Aorta (tissue), 5 donors: ENCODE measurements at regions of chr6 and their contacts with region 1.

Region 1: GRCh38 chr6:50128420-50129005 is 78.8 kb upstream of the DEFB112 start:
- DNase-seq: no peak
- ATAC-seq: no peak
- H3K4me3 ChIP-seq: no peak overlapping the region
- H3K27ac ChIP-seq: no peak overlapping the region
- H3K4me1 ChIP-seq: no peaks in the 10 kb centered on the region
- H3K27me3 ChIP-seq: no peaks in the 10 kb centered on the region

Region 2: DNA sequence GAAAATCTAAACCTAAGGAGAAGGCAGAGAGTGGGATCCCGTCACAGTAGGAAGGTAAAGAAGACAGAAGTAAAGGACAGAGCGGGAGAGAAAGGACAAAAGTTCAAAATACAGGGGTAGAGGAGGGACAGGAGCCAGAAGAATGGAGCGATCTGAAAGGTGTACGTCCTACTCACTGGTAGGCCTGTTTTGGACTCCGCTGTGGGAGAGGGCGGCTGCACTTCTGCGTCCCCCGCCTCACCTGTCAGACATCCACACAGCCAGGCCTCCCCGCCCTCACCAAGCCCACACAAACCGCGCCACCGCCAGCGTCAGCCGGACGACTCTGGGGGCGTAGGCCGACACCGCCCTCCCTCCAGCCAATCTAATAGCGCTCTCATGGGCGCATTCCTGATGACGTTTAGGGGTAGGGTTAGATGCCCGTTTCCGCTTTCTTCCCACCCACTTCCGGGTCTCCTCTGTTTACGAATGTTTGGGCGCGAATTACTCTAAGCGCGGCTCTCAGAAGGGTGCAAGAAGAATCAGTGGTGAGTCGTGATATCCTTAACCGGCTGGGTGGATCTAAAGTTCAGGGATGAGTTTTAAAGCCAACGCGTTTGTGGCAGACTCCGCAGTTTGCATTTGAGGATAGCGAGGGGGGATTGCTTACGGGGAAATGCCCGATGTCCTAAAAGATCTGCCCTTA is 665.4 kb before region 1 on chr6 and contains the starts of genes CENPQ and MMUT:
- intact Hi-C with region 1: no loop called
- DNase-seq: peak; percentile 95 to 96
- ATAC-seq: peak; percentile 99
- H3K4me3 ChIP-seq: peak within 1 kb of the TSS; percentile 94 to 100
- H3K27ac ChIP-seq: peak within 1 kb of the TSS; percentile 43 to 83
- H3K4me1 ChIP-seq: peaks cover 0 to 2% of the 10 kb centered on the region in 2 donors
- H3K27me3 ChIP-seq: no peaks in the 10 kb centered on the region
- total RNA-seq, gene CENPQ: 3.8 to 4.2 TPM
- total RNA-seq, gene MMUT: 20.7 to 24.2 TPM

Region 3: DNA sequence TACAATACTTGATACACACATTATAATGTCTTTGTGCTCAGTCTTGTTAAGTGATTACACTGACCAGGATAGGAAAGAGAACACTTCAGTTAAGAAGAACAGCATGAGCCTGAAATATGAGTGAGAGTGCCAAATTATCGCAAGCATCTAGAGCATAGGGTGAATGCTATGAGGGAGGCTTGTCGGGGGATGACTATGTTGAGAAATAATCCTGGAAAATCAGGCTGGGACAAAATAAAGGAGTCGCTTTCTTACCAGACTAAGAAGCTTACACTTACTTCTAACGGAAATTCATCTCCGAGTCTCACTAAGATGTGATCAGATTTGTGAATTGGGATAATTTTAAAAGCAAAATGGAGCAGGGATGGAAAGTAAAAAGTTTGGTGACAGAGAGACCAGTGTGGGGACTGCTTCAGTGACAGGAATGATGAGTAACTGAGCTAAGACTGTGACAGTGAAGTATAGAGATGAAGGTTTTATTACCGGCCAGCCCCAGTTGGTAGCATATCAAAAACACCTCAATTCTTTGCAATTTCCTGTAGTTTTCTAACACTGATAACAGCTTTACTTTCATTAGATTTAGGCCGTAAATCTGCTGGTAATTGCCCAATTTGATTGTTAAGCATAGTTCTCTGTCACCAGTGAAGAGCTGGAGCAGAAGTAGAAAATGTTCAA is 30.4 kb before region 1 on chr6:
- intact Hi-C with region 1: no loop called
- DNase-seq: no peak
- ATAC-seq: no peak
- H3K4me3 ChIP-seq: no peak overlapping the region
- H3K27ac ChIP-seq: no peak overlapping the region
- H3K4me1 ChIP-seq: no peaks in the 10 kb centered on the region
- H3K27me3 ChIP-seq: no peaks in the 10 kb centered on the region

Region 4: DNA sequence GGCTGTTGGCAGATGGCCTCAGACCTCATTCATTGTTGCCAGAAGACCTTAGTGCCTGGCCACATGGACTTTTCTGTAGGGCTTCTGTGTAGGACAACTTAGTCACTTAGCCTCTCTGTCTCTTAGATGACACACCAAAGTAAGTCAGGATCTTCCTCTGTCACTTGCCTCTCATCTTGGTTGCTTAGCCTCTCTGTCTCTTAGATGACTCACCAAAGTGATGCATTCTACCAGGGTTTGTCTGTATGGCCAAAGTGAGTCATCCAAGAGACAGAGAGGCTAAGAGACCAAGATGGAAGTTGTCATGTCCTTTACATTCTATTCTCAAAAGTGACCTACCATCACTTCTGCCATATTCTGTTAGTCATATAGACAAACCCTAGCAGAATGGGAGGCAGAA is 177.1 kb after region 1 on chr6:
- intact Hi-C with region 1: no loop called
- DNase-seq: no peak
- ATAC-seq: no peak
- H3K4me3 ChIP-seq: no peak overlapping the region
- H3K27ac ChIP-seq: no peak overlapping the region
- H3K4me1 ChIP-seq: no peaks in the 10 kb centered on the region
- H3K27me3 ChIP-seq: no peaks in the 10 kb centered on the region

Region 5: DNA sequence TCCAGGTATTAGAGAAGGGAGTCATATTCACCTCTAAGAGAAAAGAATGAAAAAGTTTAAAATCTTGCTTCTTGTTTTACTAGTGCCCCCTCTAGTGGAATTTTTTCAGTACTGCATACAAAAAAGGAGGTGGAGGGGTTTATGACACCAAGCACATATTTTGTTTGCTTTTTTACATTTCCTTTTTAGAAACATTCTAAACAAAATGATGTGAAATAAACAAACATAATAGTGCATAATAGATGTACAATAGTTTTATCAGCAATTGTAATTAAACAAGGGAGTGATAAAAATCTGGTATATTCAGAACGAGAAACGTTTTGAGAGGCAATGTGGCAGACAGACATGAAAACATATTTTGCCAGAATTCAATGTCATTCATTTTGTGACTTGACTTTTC is 473.8 kb after region 1 on chr6:
- intact Hi-C with region 1: loop called (anchors 5 to 10 kb)
- DNase-seq: no peak
- ATAC-seq: no peak
- H3K4me3 ChIP-seq: no peak overlapping the region
- H3K27ac ChIP-seq: no peak overlapping the region
- H3K4me1 ChIP-seq: no peaks in the 10 kb centered on the region
- H3K27me3 ChIP-seq: no peaks in the 10 kb centered on the region

Region 6: GRCh38 chr6:50791900-50792508 is 663.5 kb after region 1 on chr6:
- intact Hi-C with region 1: loop called in 1 of 2 experiments (anchors 5 kb)
- DNase-seq: no peak
- ATAC-seq: no peak
- H3K4me3 ChIP-seq: no peak overlapping the region
- H3K27ac ChIP-seq: no peak overlapping the region
- H3K4me1 ChIP-seq: no peaks in the 10 kb centered on the region
- H3K27me3 ChIP-seq: no peaks in the 10 kb centered on the region